Heart right ventricle (tissue), 16 donors: ENCODE measurements at regions of chr15 and their contacts with region 1.

Region 1: DNA sequence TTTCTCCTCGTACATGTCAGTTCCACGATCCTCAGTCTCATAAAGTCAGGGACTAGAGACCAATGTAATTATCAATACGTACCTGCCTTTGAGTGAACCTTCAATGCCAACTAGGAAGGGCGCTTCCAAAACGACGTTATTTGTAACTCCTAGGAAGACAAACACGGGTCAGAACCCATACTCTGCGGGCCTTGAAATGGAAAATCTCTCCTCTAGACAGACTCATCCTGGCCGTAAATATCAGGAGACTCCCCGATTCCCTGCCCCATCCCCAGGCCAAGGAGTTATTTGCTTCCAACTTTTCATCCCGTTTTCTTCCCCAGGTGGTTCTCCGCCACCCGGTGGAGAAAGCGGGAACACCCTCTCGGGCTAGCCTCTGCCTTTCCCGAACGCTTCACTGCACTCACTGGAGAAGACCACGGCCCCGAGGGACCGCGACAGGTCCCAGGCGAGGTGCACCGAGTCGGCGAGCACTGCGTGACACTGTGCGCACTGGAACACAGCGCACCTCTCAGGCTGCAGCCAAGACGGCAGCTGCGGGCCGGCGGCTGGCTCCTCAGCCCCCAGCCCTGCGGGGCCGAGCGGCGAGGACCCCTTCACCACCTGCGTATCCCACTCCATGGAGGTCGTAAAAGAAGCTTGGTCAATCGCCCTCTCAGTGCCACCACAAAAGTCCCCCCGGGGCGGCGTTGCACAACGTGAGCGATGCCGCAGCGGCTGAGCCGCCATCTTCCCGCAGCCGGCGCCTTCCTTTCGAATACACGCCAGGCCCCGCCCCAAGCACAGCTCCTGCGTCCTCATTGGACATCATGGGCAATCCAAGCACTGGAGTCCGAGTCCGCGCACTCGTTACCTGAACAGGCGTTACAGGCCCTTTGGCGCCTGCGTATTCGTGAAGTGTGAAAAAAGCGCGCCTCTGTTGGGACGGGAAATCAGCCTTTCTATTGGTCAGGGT is at the start of gene OIP5:
- DNase-seq: peak; percentile 95 to 97
- ATAC-seq: peak; percentile 99 to 100 (median 99)
- H3K4me3 ChIP-seq: peak within 1 kb of the TSS; percentile 73 to 96 (median 84)
- H3K27ac ChIP-seq: peak within 1 kb of the TSS in 7 of 10 donors; percentile 4 to 81 (median 42)
- H3K4me1 ChIP-seq: peaks cover 0 to 40% (median 11%) of the 10 kb centered on the region in 9 donors
- H3K27me3 ChIP-seq: no peaks in the 10 kb centered on the region
- CTCF ChIP-seq: peak in 8 of 9 donors; percentile 53 to 76 (median 72)
- total RNA-seq, gene OIP5: 0.18 to 1.0 (median 0.23) TPM in 5 of 10 donors, not detected in the others

Region 2: DNA sequence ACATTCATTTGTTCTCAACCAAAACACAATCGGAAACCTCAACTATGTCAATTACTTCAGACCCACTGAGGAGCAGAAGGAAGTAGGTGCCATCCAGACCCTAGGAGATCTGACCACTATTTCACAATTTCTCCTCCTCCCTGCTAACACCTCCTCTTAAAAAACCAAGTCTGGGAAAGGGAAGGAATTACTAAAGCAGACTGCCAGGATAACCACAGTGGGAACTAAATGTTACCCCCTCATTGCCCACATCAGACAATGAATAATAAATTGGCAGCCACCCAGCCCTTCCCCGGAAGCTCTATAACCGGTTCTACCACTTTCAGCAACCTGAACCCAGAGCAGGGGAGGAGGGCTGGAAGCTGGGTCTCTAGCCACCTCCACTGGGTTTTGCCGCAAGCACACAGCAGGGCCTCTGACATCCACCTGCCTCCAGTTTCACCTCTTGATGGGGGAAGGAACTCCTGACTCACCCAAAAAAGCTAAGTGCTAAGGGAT is 544.7 kb before region 1 on chr15:
- intact Hi-C with region 1: no loop called
- DNase-seq: no peak
- ATAC-seq: peak in 2 of 8 donors; percentile 30 to 34
- H3K4me3 ChIP-seq: no peak overlapping the region
- H3K27ac ChIP-seq: peak overlapping the region in 2 of 10 donors; percentile 6 to 33
- H3K4me1 ChIP-seq: peaks cover 0 to 25% (median 14%) of the 10 kb centered on the region in 9 donors
- H3K27me3 ChIP-seq: no peaks in the 10 kb centered on the region
- CTCF ChIP-seq: no peak

Region 3: DNA sequence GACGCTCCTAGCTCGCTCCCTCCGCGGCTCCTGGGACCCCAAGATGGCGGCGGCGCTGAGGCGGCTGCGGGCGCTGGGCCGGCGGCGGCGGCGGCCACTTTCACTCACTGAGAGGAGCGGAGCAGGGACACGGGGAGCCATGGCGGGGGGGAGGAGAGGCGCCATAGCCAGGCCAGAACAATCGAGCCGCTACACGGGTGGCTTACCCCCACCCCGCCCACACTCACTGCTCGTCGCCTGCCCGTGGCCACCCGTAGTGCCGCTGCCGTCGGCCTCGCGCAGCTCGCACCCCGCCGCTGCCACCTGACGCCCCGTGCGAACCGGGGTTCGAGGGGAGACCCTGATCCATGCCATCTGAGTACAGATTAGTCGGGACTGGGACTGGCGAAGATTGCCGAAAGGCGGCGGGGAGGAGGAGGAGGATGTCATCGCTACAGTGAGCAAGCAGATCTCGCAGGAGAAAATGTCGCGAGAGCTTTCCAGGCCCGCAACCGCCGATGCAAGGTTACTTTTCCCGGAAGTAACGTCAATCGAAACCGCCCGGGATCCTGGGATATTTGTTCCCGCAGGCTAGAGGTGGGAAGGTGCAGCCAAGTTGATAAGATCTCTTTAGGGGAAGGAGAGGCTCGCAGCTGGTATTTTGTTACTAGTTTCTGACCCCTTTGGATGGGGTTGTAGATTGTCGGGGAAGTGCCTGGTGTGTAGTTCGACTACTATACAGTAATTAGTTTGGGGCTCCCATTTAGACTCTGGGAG is 215.8 kb before region 1 on chr15 and contains the start of gene INO80:
- intact Hi-C with region 1: loop called in 1 of 10 experiments (anchors 5 kb)
- DNase-seq: peak; percentile 96 to 99
- ATAC-seq: peak; percentile 95 to 98 (median 97)
- H3K4me3 ChIP-seq: peak within 1 kb of the TSS; percentile 43 to 97 (median 82)
- H3K27ac ChIP-seq: peak within 1 kb of the TSS; percentile 96 to 100 (median 100)
- H3K4me1 ChIP-seq: peaks cover 0 to 38% (median 21%) of the 10 kb centered on the region in 9 donors
- H3K27me3 ChIP-seq: peaks cover 0 to under 1% (median 0%) of the 10 kb centered on the region in 7 donors
- CTCF ChIP-seq: peak in 1 of 9 donors; percentile 17
- total RNA-seq, gene INO80: 10.0 to 14.8 (median 12.2) TPM

Region 4: GRCh38 chr15:41230650-41231533 is 101.2 kb before region 1 on chr15 and contains the starts of genes CHP1 and EXD1:
- intact Hi-C with region 1: loop called in 1 of 10 experiments (anchors 1 kb)
- DNase-seq: peak; percentile 98
- ATAC-seq: peak; percentile 99 to 100 (median 100)
- H3K4me3 ChIP-seq: peak within 1 kb of the TSS; percentile 68 to 98 (median 82)
- H3K27ac ChIP-seq: peak within 1 kb of the TSS; percentile 85 to 96 (median 90)
- H3K4me1 ChIP-seq: peaks cover 0 to 33% (median 26%) of the 10 kb centered on the region in 9 donors
- H3K27me3 ChIP-seq: no peaks in the 10 kb centered on the region
- CTCF ChIP-seq: peak; percentile 95 to 99 (median 97)
- total RNA-seq, gene CHP1: 86.5 to 133 (median 120) TPM
- total RNA-seq, gene EXD1: not detected

Region 5: GRCh38 chr15:41283653-41284426 is 48.3 kb before region 1 on chr15:
- intact Hi-C with region 1: loop called in 1 of 10 experiments (anchors 5 kb)
- DNase-seq: peak; percentile 96 to 99
- ATAC-seq: peak; percentile 98 to 100 (median 100)
- H3K4me3 ChIP-seq: peak overlapping the region; percentile 66 to 96 (median 82)
- H3K27ac ChIP-seq: peak overlapping the region; percentile 86 to 99 (median 94)
- H3K4me1 ChIP-seq: peaks cover 0 to 48% (median 33%) of the 10 kb centered on the region in 9 donors
- H3K27me3 ChIP-seq: no peaks in the 10 kb centered on the region
- CTCF ChIP-seq: no peak

Region 6: DNA sequence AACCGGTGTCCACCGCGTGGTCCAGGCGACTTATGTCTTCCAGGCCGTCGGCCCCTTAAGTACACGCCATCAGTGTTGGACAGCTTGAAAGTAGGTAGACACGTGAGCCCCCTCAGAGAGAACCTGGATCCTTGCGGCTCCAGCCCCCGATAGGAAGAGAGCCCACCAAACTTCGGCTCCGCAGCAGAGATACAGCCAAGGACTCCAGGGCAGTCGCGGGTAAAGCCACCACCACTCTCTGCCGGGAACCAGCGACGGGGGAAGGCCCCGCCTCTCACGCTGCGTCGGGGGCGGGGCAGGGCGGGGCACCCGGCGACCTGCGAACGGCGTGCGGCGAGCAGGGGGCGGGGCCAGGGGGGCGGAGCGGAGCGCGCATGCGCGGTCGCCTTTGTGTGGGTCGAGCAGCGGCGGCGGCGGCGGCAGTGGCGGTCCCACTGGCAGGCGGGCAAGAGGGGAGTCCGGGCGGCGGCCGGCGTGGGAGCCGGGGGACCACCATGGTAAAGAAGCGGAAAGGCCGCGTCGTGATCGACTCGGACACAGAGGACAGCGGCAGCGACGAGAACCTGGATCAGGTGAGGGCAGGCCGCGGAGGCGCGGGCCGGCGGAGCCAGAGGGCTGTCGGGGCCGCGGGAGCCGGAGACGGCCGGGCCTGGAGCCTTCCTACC is 84.8 kb after region 1 on chr15 and contains the start of gene RTF1:
- intact Hi-C with region 1: loop called in 1 of 10 experiments (anchors 2 kb)
- DNase-seq: peak; percentile 95 to 98
- ATAC-seq: peak; percentile 96 to 99 (median 98)
- H3K4me3 ChIP-seq: peak within 1 kb of the TSS; percentile 81 to 100 (median 92)
- H3K27ac ChIP-seq: peak within 1 kb of the TSS; percentile 33 to 93 (median 88)
- H3K4me1 ChIP-seq: peaks cover 10 to 44% (median 31%) of the 10 kb centered on the region in 9 donors
- H3K27me3 ChIP-seq: no peaks in the 10 kb centered on the region
- CTCF ChIP-seq: no peak
- total RNA-seq, gene RTF1: 25.8 to 38.0 (median 31.4) TPM